ENCODE measurements at regions of chr15 and their contacts with region 1.

Region 1: DNA sequence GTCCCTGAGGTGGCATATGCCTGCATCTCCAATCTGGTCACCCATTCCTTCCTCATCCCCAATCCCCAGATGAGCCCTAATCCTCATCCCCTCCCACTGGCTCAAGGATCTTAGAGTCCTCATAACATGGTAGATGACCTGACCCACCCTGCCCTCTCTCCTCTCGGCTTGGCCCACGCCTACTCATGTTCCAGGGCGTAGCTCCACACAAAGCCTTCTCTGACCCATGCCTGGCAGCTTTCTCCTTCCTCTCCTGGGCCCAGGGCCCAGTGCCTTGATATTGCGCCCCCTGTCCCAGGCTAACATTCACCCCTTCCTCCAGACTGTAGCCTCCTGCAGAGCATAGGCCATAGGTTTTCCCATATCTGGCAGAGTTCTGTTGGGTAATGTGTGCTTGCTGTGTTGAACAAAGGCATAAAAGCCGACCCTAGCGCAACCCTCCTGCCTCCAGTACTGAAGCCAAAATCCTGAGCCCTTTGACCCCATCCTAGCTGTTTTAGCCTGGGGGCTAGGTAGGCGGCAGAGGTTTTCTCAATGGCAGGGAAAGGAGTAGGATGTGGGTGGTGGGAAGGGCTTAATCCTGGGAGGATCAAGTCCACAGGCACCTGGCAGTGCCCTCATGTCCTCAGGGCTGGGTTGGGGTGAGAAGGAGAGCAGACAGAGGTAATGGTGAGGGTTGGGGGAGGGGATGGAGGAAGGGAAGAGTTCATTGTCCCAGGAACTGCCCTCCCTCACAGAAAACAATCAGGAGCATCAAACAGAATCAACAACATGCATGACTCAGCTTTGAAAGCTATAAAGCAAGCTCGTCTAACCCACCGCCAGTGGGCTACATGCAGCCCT is 35.5 kb downstream of the MESD start:
- DNase-seq: no peak
- ATAC-seq: no peak

Region 2: DNA sequence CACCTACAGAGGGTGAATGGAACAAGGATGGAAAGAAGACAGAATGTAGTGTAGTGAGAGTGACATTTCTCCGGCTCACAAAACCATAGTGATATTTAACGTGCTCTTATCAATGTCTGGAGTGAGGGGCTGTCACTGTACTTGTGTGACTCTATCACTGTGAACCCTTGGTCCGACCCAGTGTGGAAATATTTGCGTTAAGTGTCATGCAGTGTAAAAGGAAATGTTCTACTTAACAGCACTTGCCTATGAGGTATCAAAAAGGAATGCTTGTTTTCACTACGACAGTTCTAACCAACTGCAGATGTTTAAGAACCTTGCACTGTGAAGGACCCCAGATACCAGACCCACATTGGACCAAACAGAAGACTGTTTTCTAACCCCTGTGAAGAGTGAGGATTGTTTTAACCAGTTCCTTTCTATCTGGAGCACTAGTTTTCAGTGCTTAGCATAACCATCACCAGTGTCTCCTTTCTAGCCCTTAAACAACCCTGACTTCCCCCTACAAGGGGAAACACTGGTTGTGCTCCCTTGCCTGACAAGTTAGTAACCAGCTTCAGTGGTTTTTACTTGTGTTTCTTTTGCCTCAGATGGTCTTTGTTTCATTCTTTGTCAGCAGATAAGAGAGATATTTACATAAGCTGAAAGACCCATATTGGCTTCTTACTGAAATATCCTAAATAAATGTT is 403.8 kb before region 1 on chr15:
- intact Hi-C with region 1: loop called in 1 of 2 experiments (anchors 10 kb)
- DNase-seq: no peak
- ATAC-seq: peak in 1 of 2 donors; percentile 67

Region 3: DNA sequence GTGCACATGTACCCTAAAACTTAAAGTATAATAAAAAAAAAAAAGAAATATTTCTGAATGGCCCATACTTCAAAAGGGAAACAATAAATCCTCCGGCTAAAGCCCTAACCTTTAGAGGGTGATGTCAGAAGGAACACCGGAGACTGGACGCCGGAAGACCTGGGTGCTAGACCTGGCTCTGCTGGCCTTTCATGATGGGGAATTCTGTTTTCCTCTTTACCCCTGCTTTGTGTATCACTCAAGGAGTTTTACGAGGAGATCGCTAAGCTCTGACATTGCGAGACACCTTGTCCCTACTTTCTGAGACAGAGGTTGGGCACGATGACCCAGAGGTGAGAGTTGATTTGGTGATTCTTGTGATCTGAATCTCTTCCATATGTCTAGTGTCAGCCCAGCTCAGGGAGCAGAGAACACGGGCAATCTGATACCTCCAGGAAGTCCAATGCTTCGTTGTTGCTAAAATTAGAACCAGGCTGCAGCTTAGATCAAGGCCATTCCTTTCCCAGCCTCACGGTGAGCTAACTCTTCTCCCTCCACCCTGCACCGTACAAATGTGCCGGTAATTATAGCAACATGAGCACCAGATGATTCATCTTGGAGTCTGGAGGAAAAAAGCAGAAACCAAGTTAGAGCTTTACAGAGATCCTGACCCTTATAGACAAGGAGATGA is 137.9 kb after region 1 on chr15:
- intact Hi-C with region 1: no loop called
- DNase-seq: no peak
- ATAC-seq: peak; percentile 67 to 94